ENCODE measurements at regions of chr4 and their contacts with region 1.

Region 1: GRCh38 chr4:10100734-10101216 is 15.8 kb downstream of the WDR1 start:
- DNase-seq: peak; percentile 75
- ATAC-seq: peak; percentile 20

Region 2: GRCh38 chr4:10054571-10055041 is 46.2 kb before region 1 on chr4:
- intact Hi-C with region 1: loop called (anchors 1 kb)
- DNase-seq: no peak
- ATAC-seq: no peak

Measured in sciatic nerve (tissue), 2 donors.